ENCODE measurements at regions of chr1 and their contacts with region 1.

Region 1: DNA sequence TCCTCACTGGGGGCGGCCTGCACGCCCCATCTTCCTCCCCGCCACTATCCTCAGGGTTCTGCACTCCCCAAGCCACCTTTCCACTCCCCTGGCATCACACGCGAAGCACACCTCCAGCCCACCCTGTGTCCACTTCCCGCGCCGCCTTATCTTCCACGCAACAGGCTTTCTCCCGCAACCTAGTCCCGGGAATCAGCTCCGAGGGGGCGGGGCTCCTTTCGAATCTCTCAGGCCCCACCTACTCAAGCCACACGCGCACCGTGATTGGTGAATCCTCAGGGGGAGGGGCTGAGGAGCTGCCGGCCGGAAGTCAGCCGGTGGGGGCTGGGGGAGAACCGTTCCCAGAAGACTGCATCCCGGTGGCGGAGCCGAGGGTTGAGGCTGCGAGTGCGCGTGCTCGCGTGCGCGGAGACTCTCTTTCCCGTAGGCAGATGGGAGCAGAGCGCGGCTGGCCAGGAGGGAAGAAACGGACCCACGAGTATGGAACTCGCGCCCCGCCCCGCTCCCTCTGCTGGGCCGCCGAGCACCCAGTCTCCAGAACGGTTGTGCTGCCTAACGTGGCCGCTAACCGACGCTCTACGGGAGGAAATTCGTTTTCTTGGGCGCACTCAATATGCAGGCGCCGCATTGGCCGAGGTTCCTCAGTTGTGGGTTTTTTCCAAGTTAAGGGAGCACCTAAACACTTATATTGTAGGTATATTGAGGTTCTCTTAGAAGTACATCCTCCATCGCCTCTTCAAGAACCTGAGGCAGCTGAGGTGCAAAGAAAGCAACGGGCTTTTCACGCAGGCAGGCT is at the start of gene PSRC1:
- DNase-seq: peak; percentile 95 to 97 (median 96)
- H3K4me3 ChIP-seq: peak within 1 kb of the TSS; percentile 52
- H3K27ac ChIP-seq: peak within 1 kb of the TSS in 1 of 2 donors; percentile 68
- H3K4me1 ChIP-seq: peaks cover 2% of the 10 kb centered on the region
- H3K27me3 ChIP-seq: no peaks in the 10 kb centered on the region
- CTCF ChIP-seq: peak in 2 of 3 donors; percentile 48 to 62
- EP300 ChIP-seq: peak; percentile 20
- POLR2A ChIP-seq: peak; percentile 65
- total RNA-seq, gene PSRC1: 1.0 to 8.1 (median 4.5) TPM

Region 2: GRCh38 chr1:108877348-108878159 is 405.6 kb before region 1 on chr1:
- intact Hi-C with region 1: loop called in 1 of 4 experiments (anchors 10 kb)
- DNase-seq: no peak
- H3K4me3 ChIP-seq: peak overlapping the region; percentile 59
- H3K27ac ChIP-seq: peak overlapping the region in 1 of 2 donors; percentile 7
- H3K4me1 ChIP-seq: peaks cover 1% of the 10 kb centered on the region
- H3K27me3 ChIP-seq: no peaks in the 10 kb centered on the region
- CTCF ChIP-seq: no peak
- EP300 ChIP-seq: no peak
- POLR2A ChIP-seq: no peak

Region 3: GRCh38 chr1:109213785-109214468 is 69.2 kb before region 1 on chr1 and contains the start of gene SARS1:
- intact Hi-C with region 1: loop called in 1 of 4 experiments (anchors 10 kb)
- DNase-seq: peak; percentile 85 to 92 (median 91)
- H3K4me3 ChIP-seq: peak within 1 kb of the TSS; percentile 81
- H3K27ac ChIP-seq: peak within 1 kb of the TSS; percentile 45 to 87
- H3K4me1 ChIP-seq: peaks cover 4% of the 10 kb centered on the region
- H3K27me3 ChIP-seq: no peaks in the 10 kb centered on the region
- CTCF ChIP-seq: peak in 1 of 3 donors; percentile 9
- EP300 ChIP-seq: no peak
- POLR2A ChIP-seq: peak; percentile 90
- total RNA-seq, gene SARS1: 83.7 to 317 (median 119) TPM

Region 4: DNA sequence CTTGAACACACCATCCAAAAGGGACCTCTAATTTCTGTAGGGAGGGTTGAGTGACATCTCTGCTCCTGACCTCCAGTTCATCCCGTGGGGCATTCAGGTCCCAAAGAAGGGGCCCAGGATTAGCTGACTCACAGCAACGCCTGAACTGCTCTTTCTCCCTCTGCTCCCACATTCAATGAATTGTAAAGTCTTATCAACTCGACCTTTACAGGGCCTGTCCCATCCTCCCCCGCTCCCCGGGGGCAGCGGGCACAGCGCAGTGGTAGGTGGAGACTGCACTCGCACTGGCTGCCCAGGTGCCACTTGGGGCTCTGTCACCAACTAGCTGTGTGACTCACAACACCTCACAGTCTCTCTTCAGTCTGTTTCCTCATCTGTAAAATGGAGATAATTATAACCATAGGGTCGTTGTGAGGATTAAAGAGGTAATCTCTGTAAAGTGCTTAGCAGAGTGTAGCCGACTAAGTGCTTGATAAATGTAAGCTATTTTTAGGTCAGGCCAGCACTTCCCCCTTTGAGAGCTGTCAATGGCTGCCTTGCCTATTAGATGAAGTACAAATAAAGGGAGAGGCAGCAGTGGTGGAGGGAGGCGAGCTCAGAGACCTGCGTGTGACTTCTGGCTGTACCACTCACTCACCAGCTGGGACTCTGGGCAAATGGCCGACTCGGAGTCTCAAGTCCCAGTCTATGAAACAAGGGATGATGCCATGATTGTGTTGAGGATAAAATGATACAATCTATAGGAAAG is 24.3 kb after region 1 on chr1:
- intact Hi-C with region 1: loop called in 1 of 4 experiments (anchors 2 kb)
- DNase-seq: no peak
- H3K4me3 ChIP-seq: no peak overlapping the region
- H3K27ac ChIP-seq: no peak overlapping the region
- H3K4me1 ChIP-seq: no peaks in the 10 kb centered on the region
- H3K27me3 ChIP-seq: no peaks in the 10 kb centered on the region
- CTCF ChIP-seq: no peak
- EP300 ChIP-seq: no peak
- POLR2A ChIP-seq: no peak

Region 5: DNA sequence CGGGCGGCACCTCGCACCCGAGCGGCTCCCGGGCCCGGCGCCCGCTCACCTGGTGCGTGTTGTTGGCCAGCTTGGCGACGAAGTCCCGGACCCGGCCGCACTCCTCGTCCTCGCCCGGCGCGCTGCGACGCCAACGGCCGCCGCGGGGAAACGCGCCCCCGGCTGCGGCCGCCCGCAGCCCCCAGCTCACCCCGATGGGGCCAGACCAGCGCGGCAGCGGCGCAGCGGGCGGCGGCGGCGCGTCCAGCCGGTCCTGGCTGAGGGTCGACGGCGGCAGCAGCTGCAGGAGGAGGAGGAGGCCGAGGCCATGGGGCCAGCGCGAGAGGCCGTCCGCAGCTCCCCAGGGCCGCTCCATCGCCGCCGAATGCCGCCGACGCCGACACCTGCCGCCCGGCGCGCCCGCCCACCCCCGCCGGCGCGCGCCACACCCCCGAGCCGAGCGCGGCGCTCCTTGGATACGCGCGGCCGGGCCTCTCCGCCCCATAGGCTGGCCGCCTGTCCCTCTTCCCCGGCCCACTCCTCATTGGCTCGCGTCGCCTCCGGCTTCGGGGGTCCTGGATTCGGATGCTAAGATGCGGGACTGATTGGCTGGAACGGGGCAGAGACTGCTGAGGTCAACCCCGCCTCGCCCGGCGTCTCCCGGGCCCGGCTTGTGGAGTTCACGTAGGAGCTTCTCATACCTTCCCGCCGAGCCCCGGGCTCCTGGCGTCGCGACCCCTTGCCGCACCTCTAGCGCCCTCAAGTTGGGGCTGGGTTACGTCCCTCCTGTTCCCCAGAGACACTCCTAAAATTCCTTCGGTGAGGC is 114.6 kb after region 1 on chr1 and contains the start of gene SORT1:
- intact Hi-C with region 1: loop called in 2 of 4 experiments (anchors 2 to 5 kb)
- DNase-seq: peak; percentile 48 to 76 (median 65)
- H3K4me3 ChIP-seq: peak within 1 kb of the TSS; percentile 55
- H3K27ac ChIP-seq: no peak within 1 kb of the TSS
- H3K4me1 ChIP-seq: peaks cover 4% of the 10 kb centered on the region
- H3K27me3 ChIP-seq: no peaks in the 10 kb centered on the region
- CTCF ChIP-seq: no peak
- EP300 ChIP-seq: no peak
- POLR2A ChIP-seq: no peak
- total RNA-seq, gene SORT1: 4.3 to 37.0 (median 16.0) TPM

Region 6: DNA sequence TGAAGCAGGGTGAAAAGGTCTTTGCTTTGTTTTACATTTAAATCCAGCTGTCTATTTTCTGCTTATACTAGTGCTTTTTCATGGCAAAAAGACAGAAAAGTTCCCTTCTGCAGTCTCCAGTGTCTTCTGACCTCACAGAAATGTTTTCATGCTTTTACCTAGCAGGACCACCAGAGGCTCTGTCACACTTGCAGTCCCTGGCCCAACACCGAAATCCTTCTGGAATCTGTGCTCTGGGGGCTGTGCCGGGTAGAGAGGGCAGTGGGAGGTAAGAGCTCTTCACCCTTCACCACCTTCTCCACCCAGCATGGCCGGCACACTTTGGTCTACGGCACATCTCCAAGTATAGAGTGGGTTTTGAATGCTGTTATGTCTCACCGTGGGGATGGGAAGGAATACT is 315.5 kb after region 1 on chr1:
- intact Hi-C with region 1: no loop called
- DNase-seq: no peak
- H3K4me3 ChIP-seq: no peak overlapping the region
- H3K27ac ChIP-seq: no peak overlapping the region
- H3K4me1 ChIP-seq: no peaks in the 10 kb centered on the region
- H3K27me3 ChIP-seq: no peaks in the 10 kb centered on the region
- CTCF ChIP-seq: no peak
- EP300 ChIP-seq: no peak
- POLR2A ChIP-seq: no peak

Measured in ovary (tissue), 10 donors.